Activated CD4-positive, alpha-beta T cell treated with anti-CD3 and anti-CD28 coated beads, Interleukin-2, amount 10 ng/mL, durations not matched to agents 24 days and 14 days (primary cell): ENCODE measurements at regions of chr2 and their contacts with region 1.

Region 1: DNA sequence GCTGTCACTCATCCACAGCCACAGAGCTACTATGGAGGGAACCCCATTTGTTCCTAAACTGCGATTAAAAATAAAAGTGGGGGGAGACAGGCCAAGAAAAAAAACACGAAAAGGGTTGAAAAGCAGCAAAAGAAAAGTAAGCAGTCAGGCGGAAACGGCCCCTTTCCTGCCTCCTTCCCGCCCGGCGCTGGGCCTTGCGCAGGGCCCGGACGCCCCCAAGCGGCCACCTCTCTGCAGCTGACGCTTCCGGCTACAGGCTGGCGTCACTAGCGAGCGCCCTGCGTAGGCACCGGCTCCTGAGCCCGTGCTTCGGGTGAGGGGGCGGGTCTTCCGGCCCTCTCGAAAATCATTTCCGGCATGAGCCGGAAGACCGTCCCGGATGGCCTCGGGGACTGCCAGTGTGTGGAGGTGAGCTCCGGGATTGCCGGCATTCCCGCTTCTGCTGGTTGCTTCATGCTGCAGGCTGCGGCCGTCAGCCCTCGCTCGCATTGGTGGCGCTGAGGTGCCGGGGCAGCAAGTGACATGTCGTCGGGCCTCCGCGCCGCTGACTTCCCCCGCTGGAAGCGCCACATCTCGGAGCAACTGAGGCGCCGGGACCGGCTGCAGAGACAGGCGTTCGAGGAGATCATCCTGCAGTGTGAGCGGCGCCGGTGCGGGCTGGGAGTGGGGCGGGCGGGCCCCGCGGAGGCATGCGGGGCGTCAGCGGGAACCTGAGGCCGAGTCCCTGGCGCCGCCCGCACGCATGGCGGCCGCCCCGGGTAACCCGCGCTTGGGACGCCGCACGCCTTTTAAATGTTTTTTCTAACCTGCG is at the start of gene ATG16L1:
- DNase-seq: peak; percentile 99
- H3K4me3 Mint-ChIP-seq: peak within 1 kb of the TSS; percentile 87
- H3K27ac Mint-ChIP-seq: peak within 1 kb of the TSS; percentile 97
- H3K4me1 Mint-ChIP-seq: peaks cover 58% of the 10 kb centered on the region
- H3K27me3 Mint-ChIP-seq: no peaks in the 10 kb centered on the region
- total RNA-seq, gene ATG16L1: 36.7 and 37.9 TPM in 2 replicates

Region 2: GRCh38 chr2:232697100-232697865 is 554.2 kb before region 1 on chr2 and contains the start of gene GIGYF2:
- intact Hi-C with region 1: loop called (anchors 5 kb)
- DNase-seq: peak; percentile 97
- H3K4me3 Mint-ChIP-seq: peak within 1 kb of the TSS; percentile 99
- H3K27ac Mint-ChIP-seq: peak within 1 kb of the TSS; percentile 92
- H3K4me1 Mint-ChIP-seq: peaks cover 28% of the 10 kb centered on the region
- H3K27me3 Mint-ChIP-seq: peaks cover 6% of the 10 kb centered on the region
- total RNA-seq, gene GIGYF2: 71.9 and 72.0 TPM in 2 replicates

Region 3: DNA sequence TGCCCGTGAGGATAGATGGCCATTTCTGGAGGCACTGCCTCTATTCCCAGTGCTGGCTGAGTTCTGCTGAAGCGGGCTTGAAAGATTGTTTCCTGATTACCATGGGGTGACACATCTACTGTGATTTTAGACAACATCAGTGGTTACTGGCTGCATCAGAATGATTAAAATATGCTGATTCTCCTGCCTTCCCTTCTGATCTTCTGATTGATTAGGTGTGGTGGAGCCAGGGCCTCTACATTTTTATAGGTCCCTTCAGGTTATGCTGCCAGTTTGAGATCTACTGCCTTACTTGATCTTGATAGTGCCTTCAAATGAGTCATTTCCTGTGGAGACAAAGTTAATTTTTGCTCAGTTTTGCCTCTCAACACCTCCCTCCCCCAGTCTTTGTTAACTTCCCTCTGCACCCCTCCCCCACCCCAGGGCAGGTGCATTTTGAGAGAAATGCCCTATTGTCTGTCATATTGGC is 413.1 kb before region 1 on chr2:
- intact Hi-C with region 1: loop called (anchors 1 kb)
- DNase-seq: peak; percentile 84
- H3K4me3 Mint-ChIP-seq: peak overlapping the region; percentile 40
- H3K27ac Mint-ChIP-seq: peak overlapping the region; percentile 51
- H3K4me1 Mint-ChIP-seq: peaks cover 28% of the 10 kb centered on the region
- H3K27me3 Mint-ChIP-seq: no peaks in the 10 kb centered on the region

Region 4: GRCh38 chr2:233061591-233062450 is 189.7 kb before region 1 on chr2:
- intact Hi-C with region 1: loop called (anchors 1 kb)
- DNase-seq: peak; percentile 79
- H3K4me3 Mint-ChIP-seq: peak overlapping the region; percentile 95
- H3K27ac Mint-ChIP-seq: peak overlapping the region; percentile 98
- H3K4me1 Mint-ChIP-seq: peaks cover 50% of the 10 kb centered on the region
- H3K27me3 Mint-ChIP-seq: no peaks in the 10 kb centered on the region

Region 5: GRCh38 chr2:233142355-233142897 is 109.1 kb before region 1 on chr2:
- intact Hi-C with region 1: loop called (anchors 5 kb)
- DNase-seq: peak; percentile 80
- H3K4me3 Mint-ChIP-seq: peak overlapping the region; percentile 47
- H3K27ac Mint-ChIP-seq: peak overlapping the region; percentile 70
- H3K4me1 Mint-ChIP-seq: peaks cover 26% of the 10 kb centered on the region
- H3K27me3 Mint-ChIP-seq: no peaks in the 10 kb centered on the region

Region 6: GRCh38 chr2:233234264-233234663 is 17.2 kb before region 1 on chr2:
- intact Hi-C with region 1: loop called (anchors 1 kb)
- DNase-seq: peak; percentile 76
- H3K4me3 Mint-ChIP-seq: peak overlapping the region; percentile 54
- H3K27ac Mint-ChIP-seq: peak overlapping the region; percentile 89
- H3K4me1 Mint-ChIP-seq: peaks cover 60% of the 10 kb centered on the region
- H3K27me3 Mint-ChIP-seq: no peaks in the 10 kb centered on the region

Region 7: GRCh38 chr2:233323851-233324250 is 72.3 kb after region 1 on chr2:
- intact Hi-C with region 1: no loop called
- DNase-seq: no peak
- H3K4me3 Mint-ChIP-seq: no peak overlapping the region
- H3K27ac Mint-ChIP-seq: no peak overlapping the region
- H3K4me1 Mint-ChIP-seq: peaks cover 3% of the 10 kb centered on the region
- H3K27me3 Mint-ChIP-seq: peaks cover 7% of the 10 kb centered on the region